Ovary (tissue), 10 donors: ENCODE measurements at regions of chr4 and their contacts with region 1.

Region 1: DNA sequence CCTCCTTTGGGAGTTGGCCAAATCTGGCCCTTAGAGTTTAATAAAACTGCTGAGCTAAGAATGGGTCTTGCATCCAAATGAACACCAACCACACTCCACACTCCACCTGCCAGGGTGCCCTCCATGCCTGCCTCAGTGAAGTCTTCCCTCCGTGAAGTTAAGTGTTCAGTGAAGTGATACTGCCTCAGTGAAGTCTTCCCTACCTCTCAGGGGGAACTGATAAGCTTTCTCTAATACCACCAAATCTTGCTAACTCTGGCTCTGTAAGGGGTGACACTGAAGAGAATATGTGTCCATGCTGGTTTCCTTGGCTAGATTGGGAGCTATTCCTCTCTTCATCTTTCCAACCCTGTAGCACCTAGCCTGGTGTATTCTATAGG is 28.0 kb downstream of the MED28 start:
- DNase-seq: no peak
- H3K4me3 ChIP-seq: no peak overlapping the region
- H3K27ac ChIP-seq: no peak overlapping the region
- H3K4me1 ChIP-seq: no peaks in the 10 kb centered on the region
- H3K27me3 ChIP-seq: no peaks in the 10 kb centered on the region
- CTCF ChIP-seq: no peak
- EP300 ChIP-seq: no peak
- POLR2A ChIP-seq: no peak

Region 2: GRCh38 chr4:17082186-17082585 is 560.2 kb before region 1 on chr4:
- intact Hi-C with region 1: no loop called
- DNase-seq: no peak
- H3K4me3 ChIP-seq: no peak overlapping the region
- H3K27ac ChIP-seq: no peak overlapping the region
- H3K4me1 ChIP-seq: no peaks in the 10 kb centered on the region
- H3K27me3 ChIP-seq: no peaks in the 10 kb centered on the region
- CTCF ChIP-seq: no peak
- EP300 ChIP-seq: no peak
- POLR2A ChIP-seq: no peak

Region 3: GRCh38 chr4:17562160-17562559 is 80.2 kb before region 1 on chr4:
- intact Hi-C with region 1: no loop called
- DNase-seq: no peak
- H3K4me3 ChIP-seq: no peak overlapping the region
- H3K27ac ChIP-seq: no peak overlapping the region
- H3K4me1 ChIP-seq: no peaks in the 10 kb centered on the region
- H3K27me3 ChIP-seq: no peaks in the 10 kb centered on the region
- CTCF ChIP-seq: no peak
- EP300 ChIP-seq: no peak
- POLR2A ChIP-seq: no peak

Region 4: GRCh38 chr4:18419780-18420179 is 777.4 kb after region 1 on chr4:
- intact Hi-C with region 1: loop called in 1 of 4 experiments (anchors 5 kb)
- DNase-seq: no peak
- H3K4me3 ChIP-seq: no peak overlapping the region
- H3K27ac ChIP-seq: no peak overlapping the region
- H3K4me1 ChIP-seq: no peaks in the 10 kb centered on the region
- H3K27me3 ChIP-seq: no peaks in the 10 kb centered on the region
- CTCF ChIP-seq: no peak
- EP300 ChIP-seq: no peak
- POLR2A ChIP-seq: no peak